Activated CD4-positive, alpha-beta T cell treated with anti-CD3 and anti-CD28 coated beads, Interleukin-2, amount 10 ng/mL, durations not matched to agents 24 days and 14 days (primary cell): ENCODE measurements at regions of chr12 and their contacts with region 1.

Region 1: DNA sequence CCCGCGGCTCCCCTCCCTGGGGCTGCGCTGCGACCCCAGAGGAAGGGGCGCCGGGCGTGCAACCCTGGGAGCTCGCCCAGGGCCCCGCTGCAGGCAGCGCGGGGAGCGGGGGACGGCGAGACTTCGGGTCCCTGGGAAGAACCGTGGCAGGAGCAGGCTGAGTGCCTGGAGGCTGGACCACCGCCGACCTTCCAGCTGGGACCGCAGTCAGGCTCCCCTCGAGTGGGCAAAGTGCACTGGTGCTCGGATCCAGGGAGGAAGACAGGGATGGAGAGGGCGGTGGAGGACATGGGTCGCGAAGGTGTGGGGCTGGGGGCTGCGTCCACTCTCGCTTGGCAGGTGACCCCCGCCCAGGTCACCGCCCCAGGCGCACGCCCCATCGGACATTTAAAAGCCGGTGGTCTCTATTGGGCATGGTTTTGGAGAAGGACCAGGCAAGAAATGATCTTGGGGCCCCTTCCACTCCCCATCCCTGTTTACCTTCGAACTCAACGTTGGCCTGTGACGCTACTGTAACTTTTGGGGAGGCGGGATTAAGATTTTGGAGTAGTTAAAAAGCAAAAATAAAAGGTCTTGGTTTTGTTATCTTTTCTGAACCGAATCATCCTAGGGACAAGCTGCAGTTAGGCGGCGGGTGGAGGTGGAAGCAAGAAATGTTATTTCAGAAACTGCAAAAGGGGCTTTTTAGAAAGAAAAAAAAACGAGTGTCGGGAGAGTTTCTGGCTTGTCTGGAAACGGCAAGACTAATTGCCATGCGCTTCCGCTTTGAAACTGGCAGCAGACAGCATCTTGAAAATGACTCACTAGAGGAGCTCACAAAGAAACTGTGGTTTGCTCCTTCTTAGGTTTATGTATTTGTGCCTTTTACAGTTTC is 1.0 kb downstream of the ELK3 start:
- DNase-seq: peak; percentile 91
- H3K4me3 Mint-ChIP-seq: peak overlapping the region; percentile 94
- H3K27ac Mint-ChIP-seq: peak overlapping the region; percentile 97
- H3K4me1 Mint-ChIP-seq: peaks cover 41% of the 10 kb centered on the region
- H3K27me3 Mint-ChIP-seq: no peaks in the 10 kb centered on the region

Region 2: GRCh38 chr12:96035278-96036236 is 159.7 kb before region 1 on chr12 and contains the start of gene LTA4H:
- intact Hi-C with region 1: loop called (anchors 1 kb)
- DNase-seq: peak; percentile 98
- H3K4me3 Mint-ChIP-seq: no peak within 1 kb of the TSS
- H3K27ac Mint-ChIP-seq: no peak within 1 kb of the TSS
- H3K4me1 Mint-ChIP-seq: peaks cover 6% of the 10 kb centered on the region
- H3K27me3 Mint-ChIP-seq: no peaks in the 10 kb centered on the region
- total RNA-seq, gene LTA4H: 63.4 and 64.1 TPM in 2 replicates

Region 3: GRCh38 chr12:96061864-96062453 is 133.2 kb before region 1 on chr12:
- intact Hi-C with region 1: loop called (anchors 5 kb)
- DNase-seq: peak; percentile 92
- H3K4me3 Mint-ChIP-seq: no peak overlapping the region
- H3K27ac Mint-ChIP-seq: no peak overlapping the region
- H3K4me1 Mint-ChIP-seq: peaks cover 24% of the 10 kb centered on the region
- H3K27me3 Mint-ChIP-seq: no peaks in the 10 kb centered on the region

Region 4: DNA sequence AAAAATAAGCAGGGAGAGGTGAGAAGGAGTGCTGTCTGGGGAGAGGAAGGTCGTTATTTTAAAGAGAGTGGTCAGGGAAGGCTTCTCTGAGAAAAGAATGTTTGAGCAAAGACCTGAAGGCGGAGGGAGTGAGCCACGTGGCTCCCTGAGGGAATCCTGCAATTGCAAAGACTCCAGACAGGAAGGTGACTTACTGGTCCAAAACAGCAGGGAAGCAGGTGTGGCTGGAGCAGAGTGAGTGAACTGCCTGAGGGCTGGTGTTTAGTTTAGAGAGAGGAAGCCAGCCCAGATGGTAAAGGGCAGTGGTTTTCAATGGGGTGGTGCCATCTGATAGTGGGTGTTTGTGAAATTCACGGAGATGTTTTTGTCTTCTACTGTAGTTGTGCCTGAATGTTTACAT is 101.0 kb before region 1 on chr12:
- intact Hi-C with region 1: no loop called
- DNase-seq: peak; percentile 57
- H3K4me3 Mint-ChIP-seq: peak overlapping the region; percentile 24
- H3K27ac Mint-ChIP-seq: peak overlapping the region; percentile 6
- H3K4me1 Mint-ChIP-seq: peaks cover 21% of the 10 kb centered on the region
- H3K27me3 Mint-ChIP-seq: no peaks in the 10 kb centered on the region

Region 5: GRCh38 chr12:96211988-96212387 is 16.8 kb after region 1 on chr12:
- intact Hi-C with region 1: loop called (anchors 1 kb)
- DNase-seq: peak; percentile 73
- H3K4me3 Mint-ChIP-seq: peak overlapping the region; percentile 64
- H3K27ac Mint-ChIP-seq: peak overlapping the region; percentile 71
- H3K4me1 Mint-ChIP-seq: peaks cover 70% of the 10 kb centered on the region
- H3K27me3 Mint-ChIP-seq: no peaks in the 10 kb centered on the region

Region 6: DNA sequence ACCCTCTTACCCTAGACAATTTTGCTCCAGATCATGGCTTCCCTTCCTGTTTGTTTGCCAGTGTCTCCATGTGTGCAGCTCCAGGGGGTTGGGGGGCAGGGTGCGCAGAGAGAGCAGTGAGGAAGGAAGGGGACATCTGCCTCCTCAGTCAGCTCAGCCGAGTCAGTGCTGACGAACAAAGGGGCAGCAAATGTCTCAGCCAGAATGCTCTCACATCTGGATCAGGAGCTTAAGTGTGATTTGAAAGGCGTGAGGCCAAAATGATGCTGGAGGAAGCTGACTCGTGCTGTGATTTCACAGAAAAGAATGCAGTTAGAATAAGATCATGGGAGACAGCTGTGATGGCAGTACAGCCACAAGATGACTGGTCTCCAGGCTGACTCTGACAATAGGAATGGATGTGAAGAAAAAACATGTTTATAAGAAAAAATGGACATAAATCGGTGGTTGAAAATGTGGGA is 232.1 kb after region 1 on chr12:
- intact Hi-C with region 1: loop called (anchors 5 kb)
- DNase-seq: peak; percentile 68
- H3K4me3 Mint-ChIP-seq: peak overlapping the region; percentile 63
- H3K27ac Mint-ChIP-seq: peak overlapping the region; percentile 80
- H3K4me1 Mint-ChIP-seq: peaks cover 37% of the 10 kb centered on the region
- H3K27me3 Mint-ChIP-seq: no peaks in the 10 kb centered on the region